ENCODE measurements at regions of chr22 and their contacts with region 1.

Region 1: DNA sequence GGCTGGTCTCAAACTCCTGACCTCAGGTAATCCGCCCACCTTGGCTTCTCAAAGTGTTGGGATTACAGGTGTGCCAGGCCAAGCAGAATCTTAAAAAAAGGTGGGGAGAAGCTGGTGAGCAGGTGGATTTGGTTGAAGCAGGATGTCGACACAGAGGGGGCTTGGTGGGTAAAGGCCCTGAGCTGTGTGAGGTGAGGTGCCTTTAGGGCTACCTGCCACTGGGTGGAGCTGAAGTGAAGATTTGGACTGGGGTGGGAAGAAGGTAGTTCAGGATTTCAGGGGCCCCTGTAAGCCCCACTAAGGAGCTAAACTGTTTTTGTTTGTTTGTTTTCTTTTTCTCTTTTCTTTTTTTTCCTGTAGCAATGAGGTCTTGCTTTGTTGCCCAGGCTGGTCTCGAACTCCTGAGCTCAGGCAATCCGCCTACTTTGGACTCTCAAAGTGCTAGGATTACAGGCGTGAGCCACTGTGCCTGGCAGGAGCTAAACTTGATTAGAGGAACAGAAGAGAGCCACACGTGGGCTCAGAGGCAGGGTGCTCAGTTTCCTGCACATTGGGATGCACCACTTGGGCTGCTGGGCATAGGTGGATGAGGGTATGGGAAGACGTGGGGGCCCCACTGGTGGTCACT is 6.0 kb downstream of the P2RX6 start:
- DNase-seq: peak in 1 of 2 experiments; percentile 73
- H3K4me3 ChIP-seq: no peak overlapping the region
- H3K27ac ChIP-seq: no peak overlapping the region
- H3K4me1 ChIP-seq: no peaks in the 10 kb centered on the region
- H3K27me3 ChIP-seq: no peaks in the 10 kb centered on the region; a peak in 1 of 7 replicates
- CTCF ChIP-seq: peak; percentile 70 to 80 (median 74)
- EP300 ChIP-seq: no peak
- POLR2A ChIP-seq: no peak
- RAD21 ChIP-seq: peak; percentile 71 to 73

Region 2: DNA sequence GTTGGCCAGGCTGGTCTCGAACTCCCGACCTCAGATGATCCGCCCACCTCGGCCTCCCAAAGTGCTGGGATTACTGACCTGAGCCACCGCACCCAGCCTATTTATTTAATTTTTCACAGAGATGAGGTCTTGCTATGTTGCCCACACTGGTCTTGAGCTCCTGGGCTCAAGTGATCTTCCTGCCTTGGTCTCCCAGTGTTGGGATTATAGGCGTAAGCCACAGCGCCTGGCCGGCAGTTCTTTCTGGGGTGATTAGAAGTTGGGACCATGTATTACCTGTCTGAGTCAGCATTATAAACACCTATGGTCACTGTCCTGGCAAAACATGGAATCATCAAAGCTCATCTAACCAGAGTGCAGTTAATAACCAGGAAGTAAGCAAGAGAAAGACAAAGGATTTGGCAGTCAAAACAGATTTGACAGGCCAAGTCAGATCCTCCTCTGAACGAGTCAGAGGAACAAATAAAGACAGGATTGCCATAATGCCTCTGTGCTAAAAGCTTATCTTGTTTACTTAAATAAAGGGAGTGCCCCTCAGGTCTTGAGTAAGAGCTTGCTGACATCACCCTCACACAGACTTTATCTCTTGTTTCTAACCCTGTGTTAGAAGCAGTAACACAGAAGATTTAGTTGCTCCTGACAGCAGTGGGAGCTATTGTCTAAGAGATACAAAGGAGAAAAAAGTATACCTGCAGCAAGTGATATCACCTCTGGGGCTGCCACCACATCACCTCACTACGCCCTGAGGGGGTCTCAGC is 243.3 kb before region 1 on chr22:
- CTCF ChIA-PET with region 1: no interaction called
- POLR2A ChIA-PET with region 1: no interaction called
- DNase-seq: no peak
- H3K4me3 ChIP-seq: no peak overlapping the region
- H3K27ac ChIP-seq: no peak overlapping the region
- H3K4me1 ChIP-seq: peaks cover 0 to 5% (median 1%) of the 10 kb centered on the region in 4 experiments; a peak in 2 of 7 replicates
- H3K27me3 ChIP-seq: no peaks in the 10 kb centered on the region
- CTCF ChIP-seq: no peak
- EP300 ChIP-seq: no peak
- POLR2A ChIP-seq: no peak
- RAD21 ChIP-seq: 0 out of 4 replicates have a peak, but pooled peaks of 1 of the 2 experiments have one; percentile 12

Region 3: DNA sequence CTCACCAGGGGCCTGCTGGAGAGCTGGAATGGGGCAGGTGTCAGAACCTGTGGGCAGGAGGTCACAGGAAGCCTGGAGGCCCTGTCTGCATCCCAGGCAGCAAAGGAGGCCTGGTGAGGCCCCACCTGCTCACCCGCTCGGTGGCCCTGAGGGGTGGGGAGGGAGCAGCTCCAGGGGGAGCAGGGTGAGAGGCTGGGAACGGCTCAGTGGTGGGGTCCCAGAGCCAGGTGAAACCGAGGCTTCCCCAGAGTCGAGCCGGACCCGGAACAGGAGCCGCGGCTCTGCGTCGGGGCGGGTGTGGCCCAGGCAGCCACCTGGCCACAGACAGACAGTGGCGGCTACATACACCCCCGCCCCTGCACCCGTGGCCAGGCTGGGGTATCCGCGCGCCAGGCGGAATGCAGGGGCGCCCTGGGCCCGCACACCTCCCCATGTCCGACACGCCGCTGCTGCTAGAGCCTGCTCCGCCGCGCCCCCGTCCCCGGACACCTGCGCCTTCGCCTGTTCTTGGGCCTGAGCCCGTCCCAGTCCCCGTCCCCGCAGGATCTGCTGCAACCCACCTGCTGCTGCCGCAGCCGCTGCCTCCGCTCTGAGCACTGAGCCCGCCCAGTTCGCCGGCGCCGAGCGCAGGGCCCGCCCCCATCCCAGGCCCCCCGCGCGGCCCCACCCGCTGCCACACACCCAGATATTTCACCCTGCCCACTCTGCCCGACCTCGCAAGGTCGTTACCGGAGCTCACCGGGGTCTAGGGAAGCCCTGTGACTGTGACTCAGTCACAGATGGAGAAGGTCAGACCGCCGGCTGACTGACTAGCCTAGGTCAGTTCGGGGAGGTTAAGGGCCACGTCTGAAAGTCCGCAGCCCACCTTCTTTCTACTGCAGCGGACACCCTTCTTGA is 11.3 kb after region 1 on chr22 and contains the start of gene SLC7A4:
- CTCF ChIA-PET with region 1: interaction called, 37 read pairs
- POLR2A ChIA-PET with region 1: no interaction called
- DNase-seq: peak in 1 of 2 experiments; percentile 67
- H3K4me3 ChIP-seq: peak within 1 kb of the TSS; percentile 45 to 70 (median 49)
- H3K27ac ChIP-seq: no peak within 1 kb of the TSS
- H3K4me1 ChIP-seq: peaks cover 0 to 4% (median 2%) of the 10 kb centered on the region in 4 experiments; a peak in 3 of 7 replicates
- H3K27me3 ChIP-seq: peaks cover 6 to 31% (median 26%) of the 10 kb centered on the region in 4 experiments
- CTCF ChIP-seq: no peak
- EP300 ChIP-seq: no peak
- POLR2A ChIP-seq: no peak
- RAD21 ChIP-seq: no peak
- total RNA-seq, gene SLC7A4: 0.27 TPM in 1 of 2 replicates, not detected in the other

Region 4: GRCh38 chr22:21045585-21046294 is 24.8 kb after region 1 on chr22 and contains the start of gene LRRC74B:
- CTCF ChIA-PET with region 1: interaction called, 18 read pairs
- POLR2A ChIA-PET with region 1: no interaction called
- DNase-seq: peak; percentile 74 to 97
- H3K4me3 ChIP-seq: peak within 1 kb of the TSS; percentile 48 to 71 (median 70)
- H3K27ac ChIP-seq: no peak within 1 kb of the TSS
- H3K4me1 ChIP-seq: peaks cover 0 to 10% (median 0%) of the 10 kb centered on the region in 4 experiments; a peak in 2 of 7 replicates
- H3K27me3 ChIP-seq: peaks cover 0 to 7% (median 2%) of the 10 kb centered on the region in 4 experiments; a peak in 3 of 7 replicates
- CTCF ChIP-seq: no peak
- EP300 ChIP-seq: no peak
- POLR2A ChIP-seq: no peak
- RAD21 ChIP-seq: no peak
- total RNA-seq, gene LRRC74B: not detected in 2 replicates

Region 5: DNA sequence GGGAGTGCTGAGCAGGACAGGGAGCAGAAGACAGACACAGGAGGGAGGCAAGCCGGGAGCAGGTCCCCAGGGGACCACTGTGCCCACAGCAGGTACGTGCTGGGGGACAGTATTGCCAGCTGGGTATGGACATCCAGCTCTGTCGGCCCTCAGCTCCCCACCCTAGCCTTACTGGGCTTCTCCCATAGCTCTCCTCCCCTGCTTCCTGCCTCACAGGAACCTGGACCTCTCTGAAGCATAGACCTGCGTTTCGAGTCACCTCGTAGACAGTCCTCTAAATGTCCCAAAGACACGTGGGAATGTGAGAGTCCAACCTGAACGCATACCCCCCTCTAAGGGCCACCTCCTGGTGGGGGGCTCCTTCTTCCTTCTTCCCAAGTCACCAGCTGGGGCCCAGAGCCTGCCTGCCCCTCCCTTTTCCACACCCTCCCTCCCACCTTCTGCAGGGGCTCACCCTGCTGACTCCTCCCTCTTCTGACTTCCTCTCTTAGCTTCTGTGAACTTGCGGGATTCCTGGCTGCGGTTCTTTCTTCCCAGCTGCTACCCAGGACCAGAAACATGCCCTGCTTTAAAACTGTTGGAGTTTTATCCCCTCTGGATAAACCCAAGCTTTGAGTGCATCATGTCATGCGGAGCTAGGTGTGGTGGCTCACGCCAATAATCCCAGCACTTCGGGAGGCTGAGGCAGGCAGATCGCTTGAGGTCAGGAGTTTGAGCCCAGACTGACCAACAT is 34.8 kb after region 1 on chr22:
- CTCF ChIA-PET with region 1: interaction called, 12 read pairs
- POLR2A ChIA-PET with region 1: no interaction called
- DNase-seq: peak in 1 of 2 experiments; percentile 54
- H3K4me3 ChIP-seq: no peak overlapping the region
- H3K27ac ChIP-seq: no peak overlapping the region
- H3K4me1 ChIP-seq: peaks cover 2 to 17% (median 12%) of the 10 kb centered on the region in 4 experiments; a peak in 5 of 7 replicates
- H3K27me3 ChIP-seq: no peaks in the 10 kb centered on the region
- CTCF ChIP-seq: no peak
- EP300 ChIP-seq: no peak
- POLR2A ChIP-seq: no peak
- RAD21 ChIP-seq: no peak

Measured in H1 (cell line).